AG04450 (cell line): ENCODE measurements at regions of chr4 and their contacts with region 1.

Region 1: GRCh38 chr4:1289207-1290164 is at the start of gene MAEA:
- DNase-seq: peak; percentile 84
- H3K4me3 ChIP-seq: peak within 1 kb of the TSS; percentile 79
- H3K27ac ChIP-seq: peak within 1 kb of the TSS; percentile 70
- H3K27me3 ChIP-seq: no peaks in the 10 kb centered on the region
- CTCF ChIP-seq: no peak
- polyA plus RNA-seq, gene MAEA: 73.3 and 77.6 TPM in 2 replicates

Region 2: DNA sequence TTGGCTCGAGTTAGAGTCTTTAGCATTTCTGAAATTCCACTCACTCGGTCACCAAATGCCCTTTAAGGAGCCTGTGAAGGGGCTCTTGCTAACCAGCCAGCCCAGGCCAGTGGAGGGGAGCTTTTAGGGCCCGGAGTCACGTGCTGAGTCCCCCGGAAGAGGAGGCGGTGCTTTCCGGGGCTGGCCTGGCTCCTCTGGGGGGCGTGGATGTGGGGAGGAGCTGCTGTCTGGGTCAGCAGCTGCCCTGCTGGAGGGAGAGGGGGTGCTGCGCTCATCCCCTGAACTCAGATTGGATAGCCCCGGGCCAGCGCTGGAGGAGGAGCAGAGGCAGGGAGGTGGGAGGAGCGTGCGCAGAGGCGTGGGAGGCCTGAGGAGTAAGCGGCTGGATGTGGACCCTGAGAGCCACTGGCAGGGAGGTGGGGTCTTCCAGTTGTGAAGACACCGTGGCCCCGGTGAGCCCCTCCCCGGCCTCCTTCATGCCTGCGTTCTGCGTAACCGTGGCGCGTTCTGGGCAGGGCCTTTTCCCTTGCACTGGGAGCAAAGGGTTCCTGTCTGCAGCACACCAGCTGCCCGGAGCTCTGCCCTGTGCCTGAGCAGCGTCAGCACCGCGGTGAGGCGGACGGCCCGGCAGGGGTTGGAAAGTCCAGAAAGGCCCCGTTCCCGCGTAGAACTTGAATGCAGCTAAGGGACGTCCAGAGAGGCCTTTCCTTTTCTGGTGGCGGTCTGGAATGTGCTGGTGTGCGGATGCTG is 19.9 kb after region 1 on chr4:
- CTCF ChIA-PET with region 1: no interaction called
- POLR2A ChIA-PET with region 1: interaction called, 17 read pairs
- DNase-seq: peak; percentile 84
- H3K4me3 ChIP-seq: peak overlapping the region; percentile 63
- H3K27ac ChIP-seq: peak overlapping the region; percentile 87
- H3K27me3 ChIP-seq: no peaks in the 10 kb centered on the region
- CTCF ChIP-seq: 0 out of 2 replicates have a peak, but pooled peaks have one; percentile 2